A549 (cell line): ENCODE measurements at regions of chr3 and their contacts with region 1.

Region 1: GRCh38 chr3:11568503-11569155 is 75.1 kb downstream of the VGLL4 start:
- DNase-seq: peak; percentile 52 to 78
- ATAC-seq: peak; percentile 79 to 85
- H3K4me3 ChIP-seq: peak overlapping the region; percentile 26
- H3K27ac ChIP-seq: peak overlapping the region; percentile 87 to 93
- H3K4me1 ChIP-seq: peaks cover 22% of the 10 kb centered on the region
- CTCF ChIP-seq: no peak
- EP300 ChIP-seq: no peak
- POLR2A ChIP-seq: no peak
- RAD21 ChIP-seq: 0 out of 5 replicates have a peak, but pooled peaks of 1 of the 2 experiments have one; percentile 10

Region 2: DNA sequence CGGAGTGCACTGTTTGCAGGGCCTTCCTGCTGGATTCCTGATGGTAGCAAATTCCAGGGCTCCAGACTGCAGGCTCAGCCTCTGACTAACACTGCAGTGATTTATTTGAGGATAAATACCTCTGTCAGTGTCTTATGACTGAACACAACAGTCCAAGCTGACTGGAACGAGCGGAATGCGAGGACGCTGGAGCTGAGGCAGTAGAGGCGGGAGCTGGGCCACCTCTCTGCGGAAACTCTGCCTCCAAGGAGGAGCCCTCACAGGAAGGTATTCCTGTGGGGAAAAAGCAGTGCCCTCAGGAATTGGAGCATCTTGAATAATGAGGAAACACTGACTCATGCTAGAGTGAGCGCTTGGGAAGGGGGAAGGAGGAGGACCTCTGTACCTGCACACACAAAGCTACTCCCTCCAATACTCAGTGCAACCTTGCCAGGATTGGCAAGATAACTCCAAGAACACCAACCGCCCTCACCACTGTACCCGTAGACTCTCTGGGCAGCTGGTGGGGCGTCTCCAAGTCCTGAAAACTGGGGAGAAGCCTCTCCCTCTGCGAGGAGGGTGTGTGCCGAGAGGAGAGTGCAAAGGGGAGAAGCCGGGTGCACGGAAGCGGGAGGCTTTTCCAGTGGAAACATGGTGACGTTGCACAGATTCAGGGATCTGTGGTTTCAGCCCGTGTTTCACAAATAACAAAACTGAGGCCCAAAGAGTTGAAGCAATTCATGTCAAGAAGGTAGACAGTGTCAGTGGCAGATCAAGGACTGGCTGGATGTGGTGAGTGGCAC is 32.1 kb after region 1 on chr3:
- CTCF ChIA-PET with region 1: interaction called, 11 read pairs
- POLR2A ChIA-PET with region 1: interaction called, 8 read pairs
- DNase-seq: peak; percentile 79 to 93
- ATAC-seq: peak; percentile 98 to 99
- H3K4me3 ChIP-seq: no peak overlapping the region
- H3K27ac ChIP-seq: peak overlapping the region; percentile 67 to 84
- H3K4me1 ChIP-seq: peaks cover 46% of the 10 kb centered on the region
- CTCF ChIP-seq: no peak
- EP300 ChIP-seq: peak in 1 of 2 experiments; percentile 44; a peak in 1 of 5 replicates
- POLR2A ChIP-seq: no peak
- RAD21 ChIP-seq: peak; percentile 27 to 34; a peak in 2 of 5 replicates